ENCODE measurements at regions of chr3 and their contacts with region 1.

Region 1: DNA sequence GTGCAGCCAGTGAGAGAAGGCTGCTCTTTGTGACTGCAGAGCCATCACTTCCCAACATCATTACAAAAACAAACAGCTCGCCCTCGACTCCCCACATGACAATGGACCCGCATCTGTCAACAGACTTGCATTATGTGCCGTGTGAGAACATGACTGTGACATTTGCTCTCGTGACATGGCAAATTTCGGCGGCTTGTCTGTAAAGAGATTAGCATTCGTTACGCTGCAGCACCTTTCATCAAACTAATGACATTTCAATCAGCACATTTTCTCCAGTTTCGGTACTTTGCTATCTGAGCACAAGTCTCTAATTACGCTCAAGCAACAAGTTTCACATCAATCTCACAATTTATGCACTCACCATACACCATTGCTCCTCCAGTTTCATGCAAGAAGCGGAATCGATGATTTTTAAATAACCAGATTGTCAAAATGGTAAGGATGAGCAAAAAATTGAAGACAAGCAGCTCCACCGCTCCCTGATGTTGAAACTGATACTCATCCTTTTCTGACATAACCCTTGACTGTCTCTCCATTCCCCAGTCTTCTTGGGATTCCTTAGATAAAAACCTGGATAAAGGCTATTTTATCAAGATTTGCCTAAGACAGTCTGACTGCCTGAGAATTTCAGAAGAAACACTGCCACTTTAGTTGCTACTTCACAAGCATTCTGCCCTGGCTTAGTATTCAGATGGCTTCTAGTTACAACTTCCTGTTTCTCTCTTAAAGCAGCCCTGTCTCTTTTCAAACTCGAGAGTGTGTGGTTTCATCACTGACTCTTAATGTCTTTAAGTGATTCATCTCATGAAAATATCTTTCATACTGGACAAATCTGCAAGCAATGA is at the start of gene SLC9A9:
- DNase-seq: peak; percentile 67 to 82 (median 80)
- H3K4me3 ChIP-seq: peak within 1 kb of the TSS; percentile 90 to 100 (median 96)
- H3K4me3 Mint-ChIP-seq: peak within 1 kb of the TSS; percentile 86 to 100
- H3K27ac ChIP-seq: peak within 1 kb of the TSS in 1 of 2 donors; percentile 92
- H3K27ac Mint-ChIP-seq: peak within 1 kb of the TSS; percentile 92 to 94 (median 93)
- H3K4me1 ChIP-seq: peaks cover 24 to 46% of the 10 kb centered on the region in 2 donors
- H3K4me1 Mint-ChIP-seq: peaks cover 57% of the 10 kb centered on the region
- H3K27me3 ChIP-seq: no peaks in the 10 kb centered on the region
- H3K27me3 Mint-ChIP-seq: peaks cover 0 to 4% (median 3%) of the 10 kb centered on the region in 3 donors
- CTCF ChIP-seq: no peak
- polyA plus RNA-seq, gene SLC9A9: 14.1 to 32.8 (median 27.0) TPM

Region 2: DNA sequence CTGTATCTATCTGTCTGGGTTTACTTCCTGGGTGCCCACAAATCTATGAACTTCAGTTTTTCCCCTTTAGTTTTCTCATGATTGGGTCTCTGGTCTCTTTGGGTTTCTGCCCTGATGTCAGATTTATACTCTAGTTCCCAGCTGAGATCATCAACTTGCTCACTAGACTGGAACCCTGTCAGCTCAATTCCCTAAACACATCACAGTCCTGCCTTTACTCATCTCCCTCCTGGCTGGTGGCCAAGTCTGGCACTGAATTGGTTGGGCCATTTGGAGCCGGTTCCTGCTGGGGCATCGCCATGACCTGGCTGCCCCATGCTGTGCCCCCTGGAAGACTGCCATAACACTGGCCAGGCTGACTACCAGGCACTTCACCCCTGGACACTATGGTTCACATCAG is 383.2 kb before region 1 on chr3:
- intact Hi-C with region 1: no loop called
- DNase-seq: no peak
- H3K4me3 ChIP-seq: no peak overlapping the region
- H3K4me3 Mint-ChIP-seq: no peak overlapping the region
- H3K27ac ChIP-seq: no peak overlapping the region
- H3K27ac Mint-ChIP-seq: no peak overlapping the region
- H3K4me1 ChIP-seq: no peaks in the 10 kb centered on the region
- H3K4me1 Mint-ChIP-seq: no peaks in the 10 kb centered on the region
- H3K27me3 ChIP-seq: no peaks in the 10 kb centered on the region
- H3K27me3 Mint-ChIP-seq: peaks cover 0 to 2% (median 0%) of the 10 kb centered on the region in 3 donors
- CTCF ChIP-seq: no peak

Region 3: DNA sequence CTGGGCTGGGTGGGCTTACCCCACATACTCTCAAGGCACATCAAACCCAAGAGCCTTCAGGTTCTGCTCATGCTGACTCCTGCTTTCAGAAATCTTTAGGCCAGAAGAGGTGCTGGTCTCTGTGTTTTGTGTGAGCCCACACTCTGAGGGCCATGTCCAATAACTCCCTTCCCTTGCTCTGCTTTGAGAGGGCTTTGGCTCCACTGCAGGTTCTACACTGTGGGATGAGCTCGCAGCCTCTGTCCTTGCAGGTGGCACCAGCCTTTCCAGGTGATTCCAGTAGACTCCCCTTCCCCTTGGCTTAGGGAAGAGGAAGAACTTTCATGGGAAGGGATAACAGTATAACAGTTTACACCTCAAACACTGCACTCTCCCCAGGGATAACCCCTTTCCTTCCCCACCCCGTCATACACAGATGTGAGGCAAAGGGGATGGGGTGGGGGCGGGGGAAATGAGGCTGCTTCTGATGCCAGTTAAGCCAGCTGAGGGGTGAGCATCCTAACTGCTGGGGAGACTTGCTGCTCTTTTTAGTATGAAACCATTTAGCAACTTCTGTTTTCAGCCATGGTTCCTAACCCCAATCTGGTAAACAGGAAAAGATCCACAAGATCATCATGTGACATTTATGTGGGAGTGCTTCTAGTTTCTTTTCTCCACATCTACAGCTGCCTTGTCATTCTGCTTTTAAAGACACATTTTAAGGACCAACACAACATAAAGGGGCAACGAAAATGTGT is 262.1 kb before region 1 on chr3:
- intact Hi-C with region 1: no loop called
- DNase-seq: peak; percentile 22 to 32 (median 26)
- H3K4me3 ChIP-seq: peak overlapping the region in 2 of 3 experiments; percentile 11 to 27
- H3K4me3 Mint-ChIP-seq: peak overlapping the region; percentile 21 to 39
- H3K27ac ChIP-seq: peak overlapping the region; percentile 62 to 80
- H3K27ac Mint-ChIP-seq: peak overlapping the region; percentile 69 to 87 (median 80)
- H3K4me1 ChIP-seq: peaks cover 18 to 19% of the 10 kb centered on the region in 2 donors
- H3K4me1 Mint-ChIP-seq: peaks cover 22% of the 10 kb centered on the region
- H3K27me3 ChIP-seq: no peaks in the 10 kb centered on the region
- H3K27me3 Mint-ChIP-seq: peaks cover 1 to 5% (median 3%) of the 10 kb centered on the region in 3 donors
- CTCF ChIP-seq: no peak

Region 4: GRCh38 chr3:143634991-143635390 is 213.0 kb before region 1 on chr3:
- intact Hi-C with region 1: no loop called
- DNase-seq: no peak
- H3K4me3 ChIP-seq: no peak overlapping the region
- H3K4me3 Mint-ChIP-seq: no peak overlapping the region
- H3K27ac ChIP-seq: no peak overlapping the region
- H3K27ac Mint-ChIP-seq: no peak overlapping the region
- H3K4me1 ChIP-seq: no peaks in the 10 kb centered on the region
- H3K4me1 Mint-ChIP-seq: no peaks in the 10 kb centered on the region
- H3K27me3 ChIP-seq: no peaks in the 10 kb centered on the region
- H3K27me3 Mint-ChIP-seq: no peaks in the 10 kb centered on the region
- CTCF ChIP-seq: no peak

Region 5: GRCh38 chr3:143795874-143796273 is 52.1 kb before region 1 on chr3:
- intact Hi-C with region 1: loop called in 1 of 2 experiments (anchors 10 kb)
- DNase-seq: peak in 1 of 3 donors; percentile 18
- H3K4me3 ChIP-seq: no peak overlapping the region
- H3K4me3 Mint-ChIP-seq: no peak overlapping the region
- H3K27ac ChIP-seq: no peak overlapping the region
- H3K27ac Mint-ChIP-seq: no peak overlapping the region
- H3K4me1 ChIP-seq: no peaks in the 10 kb centered on the region
- H3K4me1 Mint-ChIP-seq: peaks cover 9% of the 10 kb centered on the region
- H3K27me3 ChIP-seq: no peaks in the 10 kb centered on the region
- H3K27me3 Mint-ChIP-seq: peaks cover 0 to 5% (median 0%) of the 10 kb centered on the region in 3 donors
- CTCF ChIP-seq: no peak

Region 6: GRCh38 chr3:143814443-143814889 is 33.5 kb before region 1 on chr3:
- intact Hi-C with region 1: loop called in 1 of 2 experiments (anchors 5 kb)
- DNase-seq: peak; percentile 61 to 85 (median 69)
- H3K4me3 ChIP-seq: peak overlapping the region in 2 of 3 experiments; percentile 15 to 50
- H3K4me3 Mint-ChIP-seq: peak overlapping the region; percentile 61 to 91
- H3K27ac ChIP-seq: peak overlapping the region; percentile 80 to 84
- H3K27ac Mint-ChIP-seq: peak overlapping the region; percentile 95 to 99 (median 98)
- H3K4me1 ChIP-seq: peaks cover 62 to 66% of the 10 kb centered on the region in 2 donors
- H3K4me1 Mint-ChIP-seq: peaks cover 65% of the 10 kb centered on the region
- H3K27me3 ChIP-seq: no peaks in the 10 kb centered on the region
- H3K27me3 Mint-ChIP-seq: no peaks in the 10 kb centered on the region
- CTCF ChIP-seq: no peak

Region 7: GRCh38 chr3:143831208-143831607 is 16.8 kb before region 1 on chr3:
- intact Hi-C with region 1: loop called in 1 of 2 experiments (anchors 2 kb)
- DNase-seq: peak; percentile 50 to 73 (median 70)
- H3K4me3 ChIP-seq: peak overlapping the region in 1 of 3 experiments; percentile 43
- H3K4me3 Mint-ChIP-seq: peak overlapping the region; percentile 4 to 50
- H3K27ac ChIP-seq: peak overlapping the region in 1 of 2 donors; percentile 74
- H3K27ac Mint-ChIP-seq: peak overlapping the region; percentile 43 to 85 (median 82)
- H3K4me1 ChIP-seq: peaks cover 38 to 48% of the 10 kb centered on the region in 2 donors
- H3K4me1 Mint-ChIP-seq: peaks cover 62% of the 10 kb centered on the region
- H3K27me3 ChIP-seq: no peaks in the 10 kb centered on the region
- H3K27me3 Mint-ChIP-seq: peaks cover 0 to 3% (median 1%) of the 10 kb centered on the region in 3 donors
- CTCF ChIP-seq: no peak

Region 8: DNA sequence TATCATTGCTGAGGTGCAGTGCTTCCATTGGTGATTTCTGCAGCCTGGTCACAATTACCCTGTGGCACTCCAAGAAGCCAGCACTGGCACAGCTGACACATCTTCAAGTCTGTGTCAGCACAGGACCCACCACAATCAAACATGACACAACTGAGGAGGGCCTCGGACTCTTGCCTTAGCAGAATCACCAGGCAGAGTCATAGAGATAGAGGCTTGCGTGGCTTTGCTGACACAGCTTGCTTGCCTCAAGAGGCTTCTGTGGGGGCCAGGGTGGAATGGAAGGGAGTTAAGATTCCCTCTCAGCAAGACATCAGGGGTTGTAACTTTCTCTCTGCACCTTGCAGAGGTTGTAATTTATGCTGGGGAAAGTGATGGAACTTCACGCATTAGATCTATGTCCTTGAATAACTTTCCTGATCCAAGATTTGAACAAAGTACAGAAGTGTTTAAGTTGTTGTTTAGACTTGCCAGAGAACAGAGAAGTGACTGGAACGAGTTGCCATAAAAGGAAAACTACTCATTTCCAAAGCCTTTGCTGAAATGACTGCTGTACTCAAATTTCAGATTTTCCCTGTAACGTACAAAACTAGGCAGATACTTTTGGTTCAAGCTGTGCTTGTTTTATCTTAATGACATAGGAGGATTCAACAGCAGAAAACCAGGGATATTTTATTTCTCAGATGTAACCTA is 294.3 kb after region 1 on chr3:
- intact Hi-C with region 1: no loop called
- DNase-seq: no peak
- H3K4me3 ChIP-seq: no peak overlapping the region
- H3K4me3 Mint-ChIP-seq: no peak overlapping the region
- H3K27ac ChIP-seq: no peak overlapping the region
- H3K27ac Mint-ChIP-seq: no peak overlapping the region
- H3K4me1 ChIP-seq: no peaks in the 10 kb centered on the region
- H3K4me1 Mint-ChIP-seq: no peaks in the 10 kb centered on the region
- H3K27me3 ChIP-seq: no peaks in the 10 kb centered on the region
- H3K27me3 Mint-ChIP-seq: peaks cover 0 to 4% (median 2%) of the 10 kb centered on the region in 3 donors
- CTCF ChIP-seq: no peak